ENCODE measurements at regions of chr18 and their contacts with region 1.

Region 1: GRCh38 chr18:58781627-58782194 is 83.0 kb upstream of the ZNF532 start:
- DNase-seq: peak; percentile 62 to 85
- ATAC-seq: peak; percentile 80 to 92 (median 90)
- H3K4me3 ChIP-seq: no peak overlapping the region
- H3K27ac ChIP-seq: peak overlapping the region in 3 of 10 donors; percentile 36 to 67 (median 39)
- H3K4me1 ChIP-seq: peaks cover 5 to 29% (median 14%) of the 10 kb centered on the region in 9 donors
- H3K27me3 ChIP-seq: no peaks in the 10 kb centered on the region
- CTCF ChIP-seq: peak; percentile 83 to 97 (median 93)

Region 2: DNA sequence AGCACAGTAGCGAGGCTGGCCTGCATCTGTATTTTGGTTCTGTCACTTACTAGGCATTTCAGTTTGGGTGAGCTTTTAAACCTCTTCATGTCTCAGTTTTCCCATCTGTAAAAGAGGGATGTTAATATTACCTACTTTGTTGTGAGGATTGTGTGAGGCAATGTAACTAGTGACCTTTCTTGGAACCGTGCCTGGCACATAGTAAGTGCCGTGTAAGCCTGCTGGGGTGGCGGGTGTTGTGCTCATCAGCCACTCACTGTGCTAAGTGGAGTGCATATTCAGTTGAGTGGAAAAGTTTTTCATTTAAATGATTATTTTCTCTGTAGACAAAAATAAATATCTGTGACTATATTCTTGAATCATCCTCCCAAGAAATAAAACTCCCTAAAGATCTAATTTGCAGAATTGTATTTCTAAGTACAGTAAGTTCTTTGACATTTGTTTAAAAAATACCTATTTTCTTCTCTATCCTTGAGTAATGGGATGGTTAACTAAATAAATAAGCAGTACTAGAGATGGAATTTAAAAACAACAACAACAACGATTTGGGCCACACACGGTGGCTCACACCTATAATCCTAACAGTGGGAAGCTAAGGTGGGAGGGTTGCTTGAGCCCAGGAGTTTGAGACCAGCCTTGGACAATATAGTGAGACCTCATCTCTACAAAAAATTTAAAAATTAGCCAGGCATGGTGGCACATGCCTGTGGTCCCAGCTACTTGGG is 53.8 kb before region 1 on chr18:
- intact Hi-C with region 1: no loop called
- DNase-seq: peak in 1 of 2 donors; percentile 28
- ATAC-seq: peak in 2 of 8 donors; percentile 71 to 76
- H3K4me3 ChIP-seq: no peak overlapping the region
- H3K27ac ChIP-seq: no peak overlapping the region
- H3K4me1 ChIP-seq: peaks cover 0 to 10% (median 0%) of the 10 kb centered on the region in 9 donors
- H3K27me3 ChIP-seq: no peaks in the 10 kb centered on the region
- CTCF ChIP-seq: no peak

Region 3: DNA sequence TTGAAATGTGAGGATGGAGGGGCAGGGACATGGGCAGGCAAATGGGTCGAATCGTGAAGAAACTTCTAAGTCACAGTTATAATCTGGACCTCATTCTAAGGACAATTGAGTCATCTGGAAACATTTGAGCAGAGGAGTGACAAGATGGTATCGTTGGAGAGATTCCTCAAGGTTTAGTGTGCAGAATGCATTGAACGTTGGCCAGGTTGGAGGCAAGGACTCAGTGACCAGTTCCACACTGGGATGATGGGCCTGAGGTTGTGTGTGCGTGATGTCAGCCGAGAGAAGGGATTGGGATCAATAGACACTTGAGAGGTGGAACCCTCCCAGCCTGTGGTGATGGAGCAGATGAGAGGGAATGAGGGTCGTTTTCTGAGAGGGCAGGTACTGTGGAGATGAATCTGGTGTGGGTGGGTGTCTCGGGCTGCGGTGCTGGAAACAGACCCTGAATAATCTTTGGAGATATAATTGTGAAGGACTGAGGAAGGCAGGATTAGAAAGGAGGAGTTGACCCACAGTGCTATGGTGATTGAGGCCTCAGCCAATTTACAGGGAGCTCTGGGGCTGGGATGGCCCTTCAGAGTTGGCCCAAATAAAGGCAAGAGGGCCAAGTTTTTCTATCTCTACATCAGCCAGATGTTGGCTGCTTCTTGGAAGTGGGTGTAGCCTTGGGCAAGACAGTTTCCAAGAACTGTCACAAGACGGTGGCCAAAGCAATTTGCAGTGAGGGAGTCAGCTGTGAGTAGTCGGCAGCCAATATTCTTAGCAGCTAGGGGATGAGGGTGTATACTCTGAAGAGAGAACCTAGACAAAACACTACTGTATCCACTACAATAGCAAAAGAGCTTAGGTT is 77.1 kb after region 1 on chr18:
- intact Hi-C with region 1: loop called in 5 of 10 experiments (anchors 5 to 10 kb)
- DNase-seq: peak in 1 of 2 donors; percentile 44
- ATAC-seq: peak; percentile 27 to 54 (median 40)
- H3K4me3 ChIP-seq: no peak overlapping the region
- H3K27ac ChIP-seq: peak overlapping the region in 5 of 10 donors; percentile 1 to 100 (median 61)
- H3K4me1 ChIP-seq: peaks cover 4 to 47% (median 43%) of the 10 kb centered on the region in 9 donors
- H3K27me3 ChIP-seq: no peaks in the 10 kb centered on the region
- CTCF ChIP-seq: no peak

Region 4: GRCh38 chr18:58953627-58954026 is 171.9 kb after region 1 on chr18:
- intact Hi-C with region 1: loop called in 1 of 10 experiments (anchors 10 kb)
- DNase-seq: peak; percentile 45 to 69
- ATAC-seq: peak; percentile 80 to 95 (median 90)
- H3K4me3 ChIP-seq: no peak overlapping the region
- H3K27ac ChIP-seq: peak overlapping the region in 6 of 10 donors; percentile 3 to 34 (median 31)
- H3K4me1 ChIP-seq: peaks cover 0 to 31% (median 18%) of the 10 kb centered on the region in 9 donors
- H3K27me3 ChIP-seq: no peaks in the 10 kb centered on the region
- CTCF ChIP-seq: no peak

Region 5: GRCh38 chr18:58991167-58991798 is 209.6 kb after region 1 on chr18:
- intact Hi-C with region 1: loop called in 4 of 10 experiments (anchors 5 to 10 kb)
- DNase-seq: no peak
- ATAC-seq: peak in 7 of 8 donors; percentile 27 to 78 (median 52)
- H3K4me3 ChIP-seq: no peak overlapping the region
- H3K27ac ChIP-seq: peak overlapping the region in 9 of 10 donors; percentile 70 to 94 (median 87)
- H3K4me1 ChIP-seq: peaks cover 8 to 68% (median 56%) of the 10 kb centered on the region in 9 donors
- H3K27me3 ChIP-seq: no peaks in the 10 kb centered on the region
- CTCF ChIP-seq: no peak

Region 6: DNA sequence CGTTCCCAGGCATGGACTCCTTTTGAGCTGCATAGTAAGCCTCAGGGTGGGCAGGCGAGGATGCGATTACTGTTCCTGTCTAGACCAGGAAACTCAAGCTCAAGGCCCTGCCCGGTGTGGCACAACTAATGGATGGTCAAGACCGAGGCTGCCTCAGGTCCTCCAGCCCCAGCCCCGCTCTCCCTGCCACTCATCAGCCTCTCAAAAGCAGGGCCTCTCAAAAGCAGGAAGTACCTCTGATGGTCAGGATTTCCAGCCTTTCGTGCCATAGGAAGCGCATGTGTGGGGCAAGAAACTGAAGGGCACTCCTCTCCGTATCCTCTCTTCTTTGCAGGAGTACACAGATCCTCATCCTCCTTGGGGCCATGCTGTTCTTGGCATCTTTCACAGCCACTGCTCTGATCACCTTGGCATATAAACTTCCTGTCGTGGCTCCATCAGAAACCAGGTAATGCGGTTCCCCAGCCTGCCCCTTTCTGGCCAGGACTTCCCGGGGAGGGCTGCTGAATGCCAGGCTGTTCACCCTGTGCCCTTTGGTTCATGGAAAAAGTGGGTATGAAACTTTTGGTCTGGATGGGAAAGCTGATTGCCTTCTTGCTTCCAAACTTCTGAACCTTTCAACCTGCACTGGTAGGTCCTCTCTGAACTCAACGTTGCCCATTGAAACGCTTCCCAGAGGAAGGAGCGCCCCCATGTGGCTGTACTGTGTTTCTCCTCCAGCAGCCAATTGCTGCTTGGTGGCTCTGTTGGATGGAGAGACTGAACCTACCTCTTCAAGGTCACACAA is 275.2 kb after region 1 on chr18:
- intact Hi-C with region 1: loop called in 6 of 10 experiments (anchors 1 to 5 kb)
- DNase-seq: peak; percentile 82 to 87
- ATAC-seq: peak; percentile 30 to 86 (median 70)
- H3K4me3 ChIP-seq: no peak overlapping the region
- H3K27ac ChIP-seq: peak overlapping the region in 4 of 10 donors; percentile 12 to 26 (median 23)
- H3K4me1 ChIP-seq: peaks cover 0 to 33% (median 5%) of the 10 kb centered on the region in 9 donors
- H3K27me3 ChIP-seq: no peaks in the 10 kb centered on the region
- CTCF ChIP-seq: peak in 8 of 9 donors; percentile 40 to 94 (median 87)